HEK293 (cell line): ENCODE measurements at regions of chr17 and their contacts with region 1.

Region 1: GRCh38 chr17:28951991-28952975 is 965 bp upstream of the PHF12 start:
- H3K4me3 ChIP-seq: peak overlapping the region; percentile 73
- H3K27ac ChIP-seq: peak overlapping the region; percentile 87
- H3K4me1 ChIP-seq: peaks cover 7% of the 10 kb centered on the region
- CTCF ChIP-seq: no peak

Region 2: GRCh38 chr17:28710861-28711722 is 241.2 kb before region 1 on chr17:
- CTCF ChIA-PET with region 1: interaction called, 3 read pairs
- POLR2A ChIA-PET with region 1: interaction called, 15 read pairs
- H3K4me3 ChIP-seq: peak overlapping the region; percentile 51
- H3K27ac ChIP-seq: peak overlapping the region; percentile 89
- H3K4me1 ChIP-seq: peaks cover 3% of the 10 kb centered on the region
- CTCF ChIP-seq: no peak

Region 3: GRCh38 chr17:28842282-28843012 is 109.8 kb before region 1 on chr17 and contains the start of gene FAM222B:
- CTCF ChIA-PET with region 1: interaction called, 4 read pairs
- POLR2A ChIA-PET with region 1: interaction called, 15 read pairs
- H3K4me3 ChIP-seq: peak within 1 kb of the TSS; percentile 95
- H3K27ac ChIP-seq: peak within 1 kb of the TSS; percentile 77
- H3K4me1 ChIP-seq: 0 out of 2 replicates have a peak, but pooled peaks cover 2% of the 10 kb centered on the region
- CTCF ChIP-seq: peak; percentile 31

Region 4: DNA sequence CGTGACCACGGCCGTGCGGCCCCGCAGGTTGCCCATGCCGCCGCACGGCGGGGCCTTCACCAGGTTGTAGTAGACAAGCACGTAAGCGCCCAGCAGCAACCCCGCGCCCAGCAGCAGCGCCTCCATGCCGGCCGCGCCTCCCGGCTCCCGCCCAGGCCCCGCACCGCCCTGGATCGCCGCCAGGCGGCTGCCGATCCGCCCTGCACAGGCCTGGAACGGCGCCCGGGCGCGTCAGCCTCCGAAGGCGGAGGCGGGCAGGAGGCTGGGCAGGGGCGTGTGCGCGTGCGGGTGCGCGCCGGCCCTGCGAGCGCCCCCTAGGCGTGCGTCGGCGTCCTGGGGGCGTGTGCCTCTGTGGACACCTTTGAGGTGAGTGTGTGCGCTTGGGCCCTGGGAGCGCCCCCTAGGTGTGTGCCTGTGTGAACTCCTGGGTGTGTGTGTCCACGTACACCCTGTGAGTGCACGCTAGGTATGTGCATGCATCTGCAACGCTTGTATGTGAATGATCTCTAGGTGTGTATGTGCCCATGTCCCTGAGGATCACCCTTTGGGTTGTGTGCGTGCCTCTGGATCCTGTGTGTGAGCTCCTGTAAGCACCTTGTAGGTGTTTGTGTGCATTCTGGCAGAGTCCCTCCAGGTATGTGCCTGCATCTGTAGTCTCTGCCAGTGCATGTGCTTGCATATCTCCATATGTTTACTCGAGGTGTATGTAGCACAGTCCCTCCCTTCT is 49.3 kb before region 1 on chr17 and contains the start of gene DHRS13:
- CTCF ChIA-PET with region 1: interaction called, 26 read pairs
- POLR2A ChIA-PET with region 1: interaction called, 12 read pairs
- H3K4me3 ChIP-seq: peak within 1 kb of the TSS; percentile 65
- H3K27ac ChIP-seq: peak within 1 kb of the TSS; percentile 77
- H3K4me1 ChIP-seq: peaks cover 1% of the 10 kb centered on the region; the same call in 1 of the 2 replicates
- CTCF ChIP-seq: peak; percentile 99

Region 5: GRCh38 chr17:28937044-28937729 is 15.1 kb before region 1 on chr17:
- CTCF ChIA-PET with region 1: interaction called, 6 read pairs
- POLR2A ChIA-PET with region 1: interaction called, 14 read pairs
- H3K4me3 ChIP-seq: no peak overlapping the region
- H3K27ac ChIP-seq: peak overlapping the region; percentile 24; the same call in 1 of the 2 replicates
- H3K4me1 ChIP-seq: peaks cover 43% of the 10 kb centered on the region
- CTCF ChIP-seq: no peak

Region 6: GRCh38 chr17:29111816-29112499 is 159.7 kb after region 1 on chr17:
- CTCF ChIA-PET with region 1: interaction called, 680 read pairs
- POLR2A ChIA-PET with region 1: interaction called, 11 read pairs
- H3K4me3 ChIP-seq: no peak overlapping the region
- H3K27ac ChIP-seq: no peak overlapping the region
- H3K4me1 ChIP-seq: no peaks in the 10 kb centered on the region
- CTCF ChIP-seq: peak; percentile 93

Region 7: DNA sequence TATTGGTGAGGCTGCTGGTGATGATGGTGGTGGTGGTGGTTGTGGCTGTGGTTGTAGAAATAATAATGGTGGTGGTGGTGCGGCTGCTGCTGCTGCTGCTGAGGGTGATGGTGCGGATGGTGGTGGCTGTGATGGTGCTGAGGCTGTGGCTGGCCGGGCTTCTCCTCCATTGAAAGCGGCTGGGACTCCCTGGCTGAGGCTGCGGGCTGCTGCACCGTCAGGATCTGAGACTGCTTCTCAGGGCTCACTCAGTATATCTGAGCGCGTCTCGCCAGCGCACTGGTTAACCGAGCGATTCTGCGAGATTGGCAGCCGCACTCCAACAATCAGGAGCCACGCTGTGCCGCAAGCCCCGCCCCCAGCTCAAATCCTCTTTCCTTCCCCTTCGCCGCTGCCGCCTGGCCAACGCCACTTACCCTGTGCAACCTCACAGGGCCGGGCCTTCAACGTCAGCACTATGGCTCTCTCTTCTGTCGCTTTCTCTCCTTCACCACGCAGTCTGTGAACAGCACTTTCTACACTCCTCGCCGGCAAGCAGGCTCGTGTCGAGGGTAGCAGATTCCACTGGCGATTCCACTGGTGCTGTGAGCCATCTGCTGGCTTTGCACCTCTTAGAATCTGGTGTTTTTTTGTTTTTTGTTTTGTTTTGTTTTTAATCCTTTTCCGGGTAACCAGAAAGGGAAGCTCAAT is 341.8 kb after region 1 on chr17 and contains the start of gene NUFIP2:
- CTCF ChIA-PET with region 1: interaction called, 4 read pairs
- POLR2A ChIA-PET with region 1: interaction called, 10 read pairs
- H3K4me3 ChIP-seq: peak within 1 kb of the TSS; percentile 86
- H3K27ac ChIP-seq: peak within 1 kb of the TSS; percentile 99
- H3K4me1 ChIP-seq: peaks cover 11% of the 10 kb centered on the region
- CTCF ChIP-seq: no peak; the same call in 1 of the 2 replicates